CD8-positive, alpha-beta T cell (primary cell): ENCODE measurements at regions of chr3 and their contacts with region 1.

Region 1: DNA sequence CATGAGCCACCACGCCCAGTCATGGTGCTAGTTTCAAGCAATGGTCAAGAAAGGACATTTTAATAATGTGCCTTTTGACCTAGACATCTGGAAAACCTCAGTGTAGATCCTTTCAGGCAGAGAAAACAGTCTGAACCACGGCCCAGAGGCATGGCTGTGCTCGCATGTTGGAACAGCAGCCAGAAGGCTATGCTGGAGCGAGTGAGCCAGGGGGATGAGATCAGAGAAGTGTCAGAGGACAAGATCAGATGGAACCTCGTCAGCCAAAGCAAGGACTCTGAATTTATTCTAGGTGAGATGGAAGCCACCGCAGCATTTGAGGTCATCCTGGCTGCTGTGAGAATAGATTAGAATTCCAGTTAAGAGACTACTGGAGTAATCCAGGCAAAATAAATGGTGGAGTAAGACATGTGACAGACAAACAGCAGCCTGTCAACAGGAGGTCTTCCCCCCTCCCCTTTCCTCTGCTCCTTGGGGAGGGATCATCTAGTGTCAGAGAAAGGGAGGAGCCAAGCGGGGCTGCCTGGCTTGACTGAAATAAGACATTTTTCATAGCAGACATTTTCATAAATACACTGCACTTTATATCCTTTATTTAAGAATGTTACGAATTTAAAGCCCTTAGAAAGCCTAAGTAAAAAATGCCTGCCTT is 40.4 kb upstream of the ACKR4 start:
- DNase-seq: no peak
- ATAC-seq: no peak
- H3K4me3 ChIP-seq: no peak overlapping the region
- H3K4me3 Mint-ChIP-seq: no peak overlapping the region
- H3K27ac ChIP-seq: no peak overlapping the region
- H3K27ac Mint-ChIP-seq: no peak overlapping the region
- H3K4me1 ChIP-seq: no peaks in the 10 kb centered on the region
- H3K4me1 Mint-ChIP-seq: no peaks in the 10 kb centered on the region
- H3K27me3 ChIP-seq: no peaks in the 10 kb centered on the region
- H3K27me3 Mint-ChIP-seq: no peaks in the 10 kb centered on the region
- CTCF ChIP-seq: no peak

Region 2: GRCh38 chr3:132517311-132517710 is 39.3 kb before region 1 on chr3:
- CTCF ChIA-PET with region 1: no interaction called
- POLR2A ChIA-PET with region 1: no interaction called
- intact Hi-C with region 1: loop called in 1 of 2 experiments (anchors 1 kb)
- DNase-seq: no peak
- ATAC-seq: no peak
- H3K4me3 ChIP-seq: no peak overlapping the region
- H3K4me3 Mint-ChIP-seq: no peak overlapping the region
- H3K27ac ChIP-seq: no peak overlapping the region
- H3K27ac Mint-ChIP-seq: no peak overlapping the region
- H3K4me1 ChIP-seq: no peaks in the 10 kb centered on the region
- H3K4me1 Mint-ChIP-seq: no peaks in the 10 kb centered on the region
- H3K27me3 ChIP-seq: no peaks in the 10 kb centered on the region
- H3K27me3 Mint-ChIP-seq: no peaks in the 10 kb centered on the region
- CTCF ChIP-seq: no peak